Activated CD4-positive, alpha-beta T cell treated with anti-CD3 and anti-CD28 coated beads, Interleukin-2, amount 10 ng/mL, durations not matched to agents 7 days and 5 days (primary cell): ENCODE measurements at regions of chr2 and their contacts with region 1.

Region 1: DNA sequence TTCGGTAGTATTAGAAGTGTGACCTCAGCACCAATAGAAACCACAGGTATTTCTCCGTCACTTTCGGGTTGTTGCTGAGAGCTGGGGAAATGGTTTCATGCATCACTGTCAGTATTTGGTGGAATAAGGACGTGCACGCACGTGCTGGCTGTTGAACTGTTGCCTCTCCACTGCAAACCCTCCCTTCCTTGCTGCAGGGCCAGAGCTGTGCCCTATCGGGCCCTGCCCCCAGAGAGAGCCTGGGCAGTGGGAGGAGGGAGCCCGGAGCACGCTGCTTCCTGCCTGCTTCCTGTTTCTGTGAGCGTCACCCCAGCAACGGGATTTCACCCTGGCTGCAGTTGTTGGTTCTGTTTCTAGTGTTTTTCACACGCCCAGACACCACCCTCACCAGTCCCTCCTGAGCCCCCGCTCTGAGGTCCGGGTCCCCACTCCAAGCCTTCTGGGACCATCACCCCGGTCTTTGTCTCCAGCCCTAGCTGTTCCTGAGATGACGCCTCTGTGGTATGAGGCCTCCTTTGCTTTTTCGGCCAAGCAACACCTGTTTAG is 47.4 kb downstream of the LRRFIP1 start:
- DNase-seq: peak; percentile 89
- H3K4me3 Mint-ChIP-seq: peak overlapping the region; percentile 72
- H3K27ac Mint-ChIP-seq: peak overlapping the region; percentile 90
- H3K4me1 Mint-ChIP-seq: peaks cover 47% of the 10 kb centered on the region
- H3K27me3 Mint-ChIP-seq: no peaks in the 10 kb centered on the region

Region 2: GRCh38 chr2:237547841-237548416 is 126.9 kb before region 1 on chr2:
- CTCF ChIA-PET with region 1: no interaction called
- POLR2A ChIA-PET with region 1: no interaction called
- DNase-seq: no peak
- H3K4me3 Mint-ChIP-seq: no peak overlapping the region
- H3K27ac Mint-ChIP-seq: no peak overlapping the region
- H3K4me1 Mint-ChIP-seq: no peaks in the 10 kb centered on the region
- H3K27me3 Mint-ChIP-seq: peaks cover 3% of the 10 kb centered on the region

Region 3: GRCh38 chr2:237651761-237652160 is 23.0 kb before region 1 on chr2:
- CTCF ChIA-PET with region 1: no interaction called
- POLR2A ChIA-PET with region 1: no interaction called
- DNase-seq: no peak
- H3K4me3 Mint-ChIP-seq: no peak overlapping the region
- H3K27ac Mint-ChIP-seq: no peak overlapping the region
- H3K4me1 Mint-ChIP-seq: peaks cover 8% of the 10 kb centered on the region
- H3K27me3 Mint-ChIP-seq: peaks cover 9% of the 10 kb centered on the region

Region 4: GRCh38 chr2:237662671-237663093 is 12.1 kb before region 1 on chr2:
- CTCF ChIA-PET with region 1: interaction called, 13 read pairs
- POLR2A ChIA-PET with region 1: no interaction called
- DNase-seq: peak; percentile 26
- H3K4me3 Mint-ChIP-seq: no peak overlapping the region
- H3K27ac Mint-ChIP-seq: no peak overlapping the region
- H3K4me1 Mint-ChIP-seq: peaks cover 9% of the 10 kb centered on the region
- H3K27me3 Mint-ChIP-seq: peaks cover 22% of the 10 kb centered on the region

Region 5: DNA sequence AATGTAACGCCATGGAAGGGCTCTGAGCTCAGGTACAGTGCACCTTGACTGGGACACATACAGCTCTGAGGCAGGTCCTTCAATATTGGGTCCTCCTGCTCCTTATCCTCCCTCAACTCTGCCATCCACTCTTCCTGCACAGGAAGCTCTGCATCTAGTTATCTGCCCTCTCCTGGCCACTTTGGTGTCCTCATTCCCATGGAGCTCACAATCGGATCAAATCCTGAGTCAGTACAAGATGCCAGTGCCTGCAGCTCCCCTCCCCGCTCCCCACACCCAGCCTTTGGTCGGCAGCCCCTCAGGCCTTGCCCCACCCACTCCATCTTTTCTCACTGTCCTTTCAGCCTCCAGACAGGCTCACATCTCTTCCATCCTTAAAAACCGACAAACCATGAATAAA is 10.6 kb after region 1 on chr2:
- CTCF ChIA-PET with region 1: interaction called, 118 read pairs
- POLR2A ChIA-PET with region 1: interaction called, 10 read pairs
- DNase-seq: no peak
- H3K4me3 Mint-ChIP-seq: no peak overlapping the region
- H3K27ac Mint-ChIP-seq: peak overlapping the region; percentile 5
- H3K4me1 Mint-ChIP-seq: peaks cover 56% of the 10 kb centered on the region
- H3K27me3 Mint-ChIP-seq: no peaks in the 10 kb centered on the region

Region 6: GRCh38 chr2:237691908-237692600 is 17.2 kb after region 1 on chr2:
- CTCF ChIA-PET with region 1: interaction called, 118 read pairs
- POLR2A ChIA-PET with region 1: interaction called, 10 read pairs
- DNase-seq: peak; percentile 94
- H3K4me3 Mint-ChIP-seq: peak overlapping the region; percentile 94
- H3K27ac Mint-ChIP-seq: peak overlapping the region; percentile 95
- H3K4me1 Mint-ChIP-seq: peaks cover 66% of the 10 kb centered on the region
- H3K27me3 Mint-ChIP-seq: no peaks in the 10 kb centered on the region

Region 7: DNA sequence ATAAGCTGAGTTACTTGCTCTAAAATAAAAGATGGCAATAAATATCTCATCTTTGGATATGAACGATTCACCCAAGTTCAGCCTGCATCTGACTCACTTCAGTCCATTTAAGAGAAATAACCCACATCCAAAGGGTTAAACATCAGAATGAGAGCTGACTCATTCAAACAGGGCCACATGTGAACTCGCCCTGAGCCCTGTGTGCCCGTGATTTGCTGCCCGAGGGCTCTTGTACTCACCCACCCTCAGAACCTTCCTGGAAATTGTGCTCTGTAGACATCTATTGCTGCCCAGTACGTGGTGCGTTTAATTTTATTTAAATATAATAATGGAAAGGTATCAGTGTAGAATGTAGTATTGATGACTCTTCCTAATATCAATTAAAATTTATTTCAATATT is 56.9 kb after region 1 on chr2:
- CTCF ChIA-PET with region 1: interaction called, 18 read pairs
- POLR2A ChIA-PET with region 1: no interaction called
- DNase-seq: no peak
- H3K4me3 Mint-ChIP-seq: no peak overlapping the region
- H3K27ac Mint-ChIP-seq: no peak overlapping the region
- H3K4me1 Mint-ChIP-seq: peaks cover 37% of the 10 kb centered on the region
- H3K27me3 Mint-ChIP-seq: no peaks in the 10 kb centered on the region

Region 8: DNA sequence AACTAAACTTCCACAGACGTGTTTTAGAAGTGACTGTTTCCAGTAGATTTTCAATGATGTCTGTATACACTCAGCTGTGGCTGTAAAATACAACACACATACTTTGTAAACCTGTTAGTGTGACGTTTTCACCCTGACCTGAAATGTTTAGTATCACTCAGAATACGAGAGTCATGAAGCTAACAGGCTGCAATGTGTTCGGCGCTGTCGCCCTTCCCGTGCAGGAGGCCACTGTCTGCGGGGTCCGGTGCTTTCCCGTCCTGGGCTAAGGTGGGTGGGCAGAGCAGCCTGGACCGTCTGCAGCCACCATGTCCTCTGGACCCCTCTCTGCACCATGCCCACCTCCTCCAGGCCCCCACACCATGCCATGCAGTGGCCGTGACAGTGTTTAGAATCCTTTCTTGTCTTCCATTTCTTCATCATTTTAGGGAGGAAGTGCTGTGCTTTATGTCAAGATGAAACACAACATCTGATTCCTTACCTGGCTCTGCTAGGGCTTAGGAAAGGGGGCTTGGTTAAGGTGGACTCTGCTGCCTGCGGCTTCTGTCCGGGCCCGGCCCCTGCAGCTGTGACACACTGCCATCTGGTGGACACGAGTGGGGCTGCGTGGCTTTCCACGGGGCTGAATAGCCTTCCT is 69.9 kb after region 1 on chr2:
- CTCF ChIA-PET with region 1: interaction called, 53 read pairs
- POLR2A ChIA-PET with region 1: interaction called, 7 read pairs
- DNase-seq: peak; percentile 74
- H3K4me3 Mint-ChIP-seq: no peak overlapping the region
- H3K27ac Mint-ChIP-seq: peak overlapping the region; percentile 68
- H3K4me1 Mint-ChIP-seq: peaks cover 21% of the 10 kb centered on the region
- H3K27me3 Mint-ChIP-seq: no peaks in the 10 kb centered on the region